A673 (cell line): ENCODE measurements at regions of chr15 and their contacts with region 1.

Region 1: DNA sequence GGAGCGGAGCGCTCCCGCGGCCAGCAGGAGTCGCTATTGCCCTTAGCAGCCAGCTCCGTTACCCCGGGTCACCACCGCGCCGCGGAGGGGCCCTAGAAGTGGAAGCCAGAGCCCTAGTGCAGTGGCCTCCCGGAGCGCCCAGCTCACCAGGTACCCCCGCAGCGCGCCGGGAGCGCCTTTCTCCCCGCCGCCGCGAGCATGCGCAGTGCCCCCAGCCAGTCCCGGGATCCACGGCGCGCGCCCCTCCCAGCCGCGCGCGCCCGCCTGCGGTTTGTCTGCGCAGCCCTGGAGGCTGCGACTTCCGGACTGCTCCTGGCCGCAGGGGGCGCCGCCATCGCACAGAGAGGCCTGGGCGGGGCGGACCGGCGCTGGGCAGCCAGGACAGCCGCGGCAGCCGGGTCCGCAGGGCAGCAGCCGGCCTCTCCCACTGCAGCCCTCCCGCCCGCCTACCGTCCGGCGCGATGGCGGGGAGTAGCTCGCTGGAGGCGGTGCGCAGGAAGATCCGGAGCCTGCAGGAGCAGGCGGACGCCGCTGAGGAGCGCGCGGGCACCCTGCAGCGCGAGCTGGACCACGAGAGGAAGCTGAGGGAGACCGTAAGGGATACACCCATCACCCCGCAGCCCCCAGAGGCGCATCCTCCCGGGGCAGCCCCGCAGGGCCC is 5.7 kb downstream of the TPM1 start:
- DNase-seq: peak; percentile 88
- H3K4me3 ChIP-seq: peak overlapping the region; percentile 81
- H3K27ac ChIP-seq: no peak overlapping the region
- H3K4me1 ChIP-seq: peaks cover 27% of the 10 kb centered on the region
- H3K27me3 ChIP-seq: peaks cover 29% of the 10 kb centered on the region
- CTCF ChIP-seq: peak; percentile 96

Region 2: GRCh38 chr15:62782039-62782791 is 266.0 kb before region 1 on chr15:
- CTCF ChIA-PET with region 1: interaction called, 3 read pairs
- POLR2A ChIA-PET with region 1: no interaction called
- intact Hi-C with region 1: loop called (anchors 2 kb)
- DNase-seq: peak; percentile 78
- H3K4me3 ChIP-seq: no peak overlapping the region
- H3K27ac ChIP-seq: no peak overlapping the region
- H3K4me1 ChIP-seq: no peaks in the 10 kb centered on the region
- H3K27me3 ChIP-seq: no peaks in the 10 kb centered on the region
- CTCF ChIP-seq: peak; percentile 62

Region 3: DNA sequence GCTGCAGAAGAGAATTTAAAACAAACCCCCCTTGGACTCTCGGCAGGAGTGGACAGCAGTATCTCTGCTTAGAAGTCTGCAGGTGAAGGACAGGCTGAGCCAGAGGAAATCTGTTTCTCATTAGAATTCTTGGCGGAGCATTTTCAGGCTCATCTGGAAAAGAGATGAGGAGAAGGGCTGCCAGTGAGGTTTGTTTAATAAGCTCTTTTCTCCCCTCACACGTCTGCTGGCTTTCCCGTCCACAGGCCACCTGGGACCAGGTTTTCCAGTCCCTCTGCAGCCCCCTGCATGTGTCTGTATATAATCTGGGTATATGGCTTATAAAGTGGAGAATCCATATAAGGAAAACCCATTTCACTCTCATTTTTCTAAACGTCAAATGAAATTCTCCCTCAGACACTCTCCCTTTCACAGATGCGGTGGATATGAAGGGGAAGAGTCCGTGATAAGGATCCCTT is 161.1 kb before region 1 on chr15:
- CTCF ChIA-PET with region 1: interaction called, 12 read pairs
- POLR2A ChIA-PET with region 1: no interaction called
- intact Hi-C with region 1: no loop called
- DNase-seq: no peak
- H3K4me3 ChIP-seq: no peak overlapping the region
- H3K27ac ChIP-seq: no peak overlapping the region
- H3K4me1 ChIP-seq: no peaks in the 10 kb centered on the region
- H3K27me3 ChIP-seq: no peaks in the 10 kb centered on the region
- CTCF ChIP-seq: no peak

Region 4: GRCh38 chr15:63093486-63094205 is 45.4 kb after region 1 on chr15:
- CTCF ChIA-PET with region 1: interaction called, 6 read pairs
- POLR2A ChIA-PET with region 1: no interaction called
- intact Hi-C with region 1: loop called (anchors 2 kb)
- DNase-seq: peak; percentile 70
- H3K4me3 ChIP-seq: no peak overlapping the region
- H3K27ac ChIP-seq: no peak overlapping the region
- H3K4me1 ChIP-seq: no peaks in the 10 kb centered on the region
- H3K27me3 ChIP-seq: no peaks in the 10 kb centered on the region
- CTCF ChIP-seq: peak; percentile 82

Region 5: GRCh38 chr15:63145426-63145825 is 97.2 kb after region 1 on chr15:
- CTCF ChIA-PET with region 1: no interaction called
- POLR2A ChIA-PET with region 1: no interaction called
- intact Hi-C with region 1: no loop called
- DNase-seq: no peak
- H3K4me3 ChIP-seq: no peak overlapping the region
- H3K27ac ChIP-seq: no peak overlapping the region
- H3K4me1 ChIP-seq: no peaks in the 10 kb centered on the region
- H3K27me3 ChIP-seq: no peaks in the 10 kb centered on the region
- CTCF ChIP-seq: no peak

Region 6: DNA sequence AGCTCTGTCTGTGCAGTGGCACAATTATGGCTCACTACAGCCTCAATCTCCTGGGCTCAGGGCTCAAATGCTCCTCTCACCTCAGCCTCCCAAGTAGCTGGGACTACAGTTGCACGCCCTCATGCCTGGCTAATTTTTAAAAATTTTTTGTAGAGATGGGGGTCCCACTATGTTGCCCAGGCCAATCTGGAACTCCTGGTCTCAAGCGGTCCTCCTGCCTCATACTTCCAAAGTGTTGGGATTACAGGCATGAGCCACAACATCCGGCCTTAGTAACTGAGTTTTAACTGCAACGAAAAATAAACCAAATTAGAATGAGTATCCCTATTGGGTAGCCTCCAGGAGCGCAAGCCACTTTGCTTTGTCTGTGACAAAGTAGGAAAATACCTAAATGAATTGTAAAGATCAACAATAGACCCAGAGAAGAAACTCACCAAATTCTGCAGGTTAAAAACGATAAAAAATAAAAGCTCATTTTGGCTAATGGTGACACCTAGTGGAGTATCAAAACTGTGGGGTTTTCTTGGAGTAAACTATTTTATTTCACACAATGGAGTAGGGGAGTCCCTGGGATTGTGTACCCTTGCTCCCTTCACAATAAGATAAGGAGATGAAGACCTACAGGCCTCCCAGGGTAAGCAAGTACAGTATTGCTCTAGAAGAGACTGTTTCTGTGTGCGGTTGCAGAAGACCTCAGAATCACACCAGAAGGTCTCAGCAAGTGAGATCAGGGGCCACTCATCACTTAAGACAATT is 354.4 kb after region 1 on chr15:
- CTCF ChIA-PET with region 1: interaction called, 10 read pairs
- POLR2A ChIA-PET with region 1: no interaction called
- intact Hi-C with region 1: loop called (anchors 5 kb)
- DNase-seq: peak; percentile 67
- H3K4me3 ChIP-seq: no peak overlapping the region
- H3K27ac ChIP-seq: no peak overlapping the region
- H3K4me1 ChIP-seq: peaks cover 25% of the 10 kb centered on the region
- H3K27me3 ChIP-seq: no peaks in the 10 kb centered on the region
- CTCF ChIP-seq: peak; percentile 68